Activated CD4-positive, alpha-beta memory T cell treated with anti-CD3 and anti-CD28 coated beads, Interleukin-2, amount 10 ng/mL, durations not matched to agents 7 days and 5 days (primary cell): ENCODE measurements at regions of chr14 and their contacts with region 1.

Region 1: DNA sequence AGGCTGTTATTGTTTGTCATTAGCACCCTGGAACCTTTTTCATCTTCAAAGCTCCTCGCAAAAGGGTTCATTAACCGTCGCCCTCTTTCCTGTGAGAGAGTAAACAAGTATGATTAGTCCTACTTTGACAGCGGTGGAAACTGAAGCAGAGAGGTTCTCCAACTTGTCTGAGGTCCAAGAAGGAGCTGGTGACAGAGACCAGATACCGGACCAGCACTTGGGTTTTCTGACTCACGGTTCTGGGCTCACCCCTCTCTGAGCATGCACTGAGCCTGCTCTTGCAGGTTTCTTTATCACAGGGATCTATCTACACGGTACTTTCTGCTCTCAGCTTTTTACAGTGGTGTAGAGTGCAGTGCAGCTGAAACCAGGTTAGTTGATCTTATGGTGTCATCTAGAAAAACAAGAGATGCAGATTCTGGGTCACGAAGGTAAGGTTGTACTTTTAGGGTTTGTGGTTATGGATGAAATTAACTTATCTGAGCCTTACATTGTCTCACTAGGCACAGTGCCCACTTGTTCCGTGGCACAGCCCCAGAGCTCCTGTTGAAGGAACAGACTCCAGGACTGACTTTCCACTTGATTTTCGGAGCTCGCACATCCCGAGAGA is 62.1 kb downstream of the PPP2R5C start:
- DNase-seq: peak; percentile 77
- H3K4me3 Mint-ChIP-seq: peak overlapping the region; percentile 84
- H3K27ac Mint-ChIP-seq: peak overlapping the region; percentile 98
- H3K4me1 Mint-ChIP-seq: peaks cover 79% of the 10 kb centered on the region
- H3K27me3 Mint-ChIP-seq: no peaks in the 10 kb centered on the region

Region 2: GRCh38 chr14:101707068-101707842 is 116.4 kb before region 1 on chr14:
- CTCF ChIA-PET with region 1: interaction called, 6 read pairs
- POLR2A ChIA-PET with region 1: interaction called, 27 read pairs
- DNase-seq: peak; percentile 68
- H3K4me3 Mint-ChIP-seq: no peak overlapping the region
- H3K27ac Mint-ChIP-seq: peak overlapping the region; percentile 73
- H3K4me1 Mint-ChIP-seq: peaks cover 45% of the 10 kb centered on the region
- H3K27me3 Mint-ChIP-seq: peaks cover 15% of the 10 kb centered on the region

Region 3: GRCh38 chr14:101731187-101732080 is 92.2 kb before region 1 on chr14:
- CTCF ChIA-PET with region 1: no interaction called
- POLR2A ChIA-PET with region 1: interaction called, 14 read pairs
- DNase-seq: peak; percentile 85
- H3K4me3 Mint-ChIP-seq: peak overlapping the region; percentile 70
- H3K27ac Mint-ChIP-seq: peak overlapping the region; percentile 96
- H3K4me1 Mint-ChIP-seq: peaks cover 48% of the 10 kb centered on the region
- H3K27me3 Mint-ChIP-seq: no peaks in the 10 kb centered on the region

Region 4: DNA sequence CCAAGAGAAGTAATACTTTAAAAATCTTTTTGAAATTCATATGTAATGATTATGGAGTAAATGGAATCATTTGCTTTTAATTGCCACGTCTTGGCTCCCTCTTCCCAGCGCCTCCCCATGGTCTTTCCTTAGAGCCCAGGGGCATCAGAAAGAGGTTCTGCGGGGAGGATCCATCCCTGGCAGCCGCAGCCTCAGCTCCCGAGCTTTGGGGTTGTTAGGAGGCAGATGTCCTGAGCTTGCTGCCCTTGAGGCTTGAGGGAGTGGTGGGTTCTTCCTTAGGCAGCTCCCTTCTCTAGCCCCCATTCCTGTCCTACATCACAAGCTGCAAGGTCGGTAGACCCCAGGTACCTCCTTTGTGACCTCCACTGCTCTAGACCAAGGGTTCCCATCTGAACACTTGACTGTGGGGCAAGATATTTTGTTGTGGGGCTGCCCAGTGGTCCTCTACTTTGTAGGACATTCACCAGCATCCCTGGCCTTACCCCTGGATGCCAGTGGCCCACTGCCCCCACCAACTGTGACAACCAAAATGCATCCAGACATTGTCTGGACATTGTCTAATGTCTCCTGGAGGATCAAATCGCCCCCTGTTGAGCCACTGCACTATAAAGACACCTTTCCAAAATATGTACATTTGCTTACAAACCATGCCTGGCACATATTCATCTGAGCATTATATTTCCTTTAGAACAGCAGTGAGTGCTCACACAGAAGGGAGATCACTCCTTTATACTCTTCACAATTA is 55.8 kb before region 1 on chr14:
- CTCF ChIA-PET with region 1: interaction called, 37 read pairs
- POLR2A ChIA-PET with region 1: interaction called, 17 read pairs
- DNase-seq: no peak
- H3K4me3 Mint-ChIP-seq: no peak overlapping the region
- H3K27ac Mint-ChIP-seq: no peak overlapping the region
- H3K4me1 Mint-ChIP-seq: peaks cover 22% of the 10 kb centered on the region
- H3K27me3 Mint-ChIP-seq: no peaks in the 10 kb centered on the region

Region 5: DNA sequence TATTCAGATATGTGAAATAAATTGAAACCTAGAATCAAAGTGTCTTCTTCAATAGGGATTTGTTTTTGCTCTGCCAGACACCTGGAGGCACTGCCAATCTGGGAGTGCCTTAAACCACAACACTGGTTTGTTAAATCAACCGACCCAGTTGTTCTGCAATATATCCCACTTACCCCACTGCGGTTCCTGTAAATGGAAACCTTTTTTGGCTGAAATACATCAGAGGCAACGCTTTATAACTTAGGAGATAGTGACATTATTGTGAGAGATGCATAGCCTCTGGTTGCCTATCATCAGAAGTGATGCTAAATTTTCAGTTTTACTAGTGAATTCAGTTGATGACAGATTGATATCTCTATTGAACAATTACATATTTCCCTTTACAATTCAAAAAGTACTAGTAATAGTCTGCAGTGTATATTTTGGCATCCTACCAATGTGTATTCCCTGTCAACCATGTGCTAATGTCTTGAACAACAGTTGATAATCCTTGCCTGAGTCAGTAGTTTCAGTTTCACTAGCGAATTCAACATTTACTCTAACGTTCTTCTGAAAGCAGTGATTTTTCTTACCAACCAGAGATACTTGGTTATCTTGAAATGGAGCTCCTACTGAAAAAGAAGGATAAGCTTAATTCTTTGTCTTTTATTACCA is 31.6 kb before region 1 on chr14:
- CTCF ChIA-PET with region 1: interaction called, 8 read pairs
- POLR2A ChIA-PET with region 1: interaction called, 17 read pairs
- DNase-seq: no peak
- H3K4me3 Mint-ChIP-seq: peak overlapping the region; percentile 47
- H3K27ac Mint-ChIP-seq: peak overlapping the region; percentile 41
- H3K4me1 Mint-ChIP-seq: peaks cover 21% of the 10 kb centered on the region
- H3K27me3 Mint-ChIP-seq: no peaks in the 10 kb centered on the region

Region 6: DNA sequence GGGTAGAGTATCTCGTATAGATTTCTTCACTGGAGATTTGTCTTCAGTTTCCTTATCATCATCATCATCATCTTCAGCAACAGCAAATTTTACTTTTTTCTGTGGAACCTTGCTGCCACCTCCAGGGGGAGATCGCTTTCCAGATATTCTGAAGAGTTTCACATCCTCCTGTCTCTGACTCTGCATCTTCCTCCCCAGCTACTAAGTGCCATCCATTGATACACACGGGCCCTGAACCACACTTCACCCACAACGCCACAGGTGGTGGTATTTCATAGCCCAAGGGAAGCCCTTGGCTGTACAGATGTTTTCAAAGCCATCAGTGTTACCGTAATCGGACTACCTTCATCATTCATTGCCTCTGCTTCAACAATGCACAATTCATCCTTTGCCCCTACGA is 20.0 kb after region 1 on chr14:
- CTCF ChIA-PET with region 1: interaction called, 13 read pairs
- POLR2A ChIA-PET with region 1: interaction called, 87 read pairs
- DNase-seq: peak; percentile 70
- H3K4me3 Mint-ChIP-seq: no peak overlapping the region
- H3K27ac Mint-ChIP-seq: peak overlapping the region; percentile 37
- H3K4me1 Mint-ChIP-seq: peaks cover 88% of the 10 kb centered on the region
- H3K27me3 Mint-ChIP-seq: no peaks in the 10 kb centered on the region

Region 7: DNA sequence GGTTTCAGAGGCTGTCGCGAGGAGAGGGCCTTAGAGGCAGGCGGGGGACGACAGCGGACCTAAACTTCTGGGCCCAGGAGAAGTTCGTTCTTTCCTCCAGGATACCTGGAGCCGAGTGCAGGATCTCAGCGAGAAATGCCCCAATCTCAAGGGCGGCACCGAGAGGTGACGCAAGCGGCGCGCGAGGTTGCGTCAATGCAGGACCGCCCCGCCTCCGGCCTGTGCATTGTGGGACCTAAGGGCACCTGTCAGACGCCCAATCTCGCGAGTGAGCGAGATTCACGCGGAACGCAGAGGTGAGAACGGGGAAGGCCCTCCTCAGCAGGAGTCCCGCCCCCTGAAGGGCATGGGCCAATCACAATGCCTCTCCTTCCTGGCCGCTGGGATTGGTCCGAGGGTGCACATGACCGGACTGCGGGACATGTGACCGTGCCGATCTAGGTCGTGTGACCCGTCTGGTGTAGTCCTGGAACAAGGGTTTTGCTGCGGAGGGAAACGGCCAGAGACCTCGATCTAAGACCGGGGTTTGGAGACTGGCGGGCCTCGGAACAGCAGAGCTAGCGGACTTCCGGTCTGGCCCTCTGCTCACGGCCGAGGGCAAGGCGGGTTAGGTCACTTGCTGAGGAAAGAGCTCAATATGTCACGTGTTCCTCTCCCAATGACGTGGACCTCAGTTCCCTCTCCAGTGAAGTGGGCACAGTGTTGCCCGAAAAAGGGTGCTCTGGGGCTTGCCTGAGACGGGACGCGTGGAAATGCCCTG is 124.5 kb after region 1 on chr14:
- CTCF ChIA-PET with region 1: interaction called, 5 read pairs
- POLR2A ChIA-PET with region 1: interaction called, 10 read pairs
- DNase-seq: peak; percentile 100
- H3K4me3 Mint-ChIP-seq: peak overlapping the region; percentile 89
- H3K27ac Mint-ChIP-seq: peak overlapping the region; percentile 85
- H3K4me1 Mint-ChIP-seq: peaks cover 26% of the 10 kb centered on the region
- H3K27me3 Mint-ChIP-seq: peaks cover 18% of the 10 kb centered on the region